ENCODE measurements at regions of chr12 and their contacts with region 1.

Region 1: DNA sequence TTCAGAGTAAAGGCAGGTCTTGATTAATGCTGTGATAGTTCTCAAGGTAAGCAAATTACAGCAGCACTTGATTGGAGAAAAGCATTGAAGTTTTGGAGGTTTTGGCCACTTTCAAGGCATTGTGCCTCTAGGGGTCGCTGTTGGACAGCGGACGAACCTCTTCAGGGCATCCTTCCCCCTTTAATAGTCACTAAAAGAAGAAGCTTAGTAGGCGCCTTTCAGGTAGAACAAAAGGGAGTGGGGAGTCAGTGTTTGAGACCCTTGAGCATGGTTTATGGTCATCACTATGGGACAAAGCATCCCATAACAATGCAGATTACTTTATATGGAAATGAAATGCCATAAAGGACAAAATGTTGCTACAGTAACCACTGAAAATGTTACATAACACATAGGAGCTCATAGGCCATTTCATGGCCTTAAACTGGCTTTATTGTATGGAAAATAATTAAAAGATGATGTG is 199.5 kb upstream of the DCN start:
- H3K4me3 ChIP-seq: peak overlapping the region; percentile 19
- H3K27ac ChIP-seq: peak overlapping the region; percentile 28; the same call in 1 of the 2 replicates
- H3K4me1 ChIP-seq: no peaks in the 10 kb centered on the region
- CTCF ChIP-seq: peak; percentile 50

Region 2: DNA sequence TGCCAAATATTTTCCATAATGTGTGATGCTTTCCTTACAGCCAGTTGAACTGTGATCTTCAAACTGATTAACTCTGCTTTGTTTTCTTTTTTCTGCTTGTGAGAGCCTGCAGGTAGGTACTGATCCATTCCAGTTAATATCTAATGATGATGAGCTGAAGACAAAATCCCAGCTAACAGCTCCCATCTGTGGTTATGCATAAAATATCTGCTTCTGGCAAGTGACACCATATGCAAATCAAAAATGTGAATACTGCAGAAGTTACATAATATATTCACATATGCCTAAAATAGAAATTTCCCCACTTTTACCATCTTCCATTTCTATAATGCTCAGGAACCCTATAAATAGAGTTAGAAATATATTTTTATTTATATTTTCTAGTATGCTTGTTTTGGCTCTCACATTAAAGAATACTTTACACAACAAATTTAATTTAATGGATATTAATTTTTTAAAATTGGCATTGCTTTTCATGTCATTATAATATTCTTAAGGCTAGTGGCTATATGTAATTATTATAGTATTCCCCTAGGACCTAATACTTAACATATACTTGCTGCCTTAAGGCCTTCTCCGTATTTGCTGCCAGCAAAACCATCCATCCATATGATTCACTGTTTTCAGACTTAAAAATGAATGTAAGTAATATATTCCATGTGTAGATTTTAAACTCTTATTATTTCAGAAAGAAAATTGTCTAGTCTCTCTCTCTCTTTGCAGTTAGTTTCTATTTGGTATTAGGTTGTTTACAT is 511.0 kb before region 1 on chr12:
- CTCF ChIA-PET with region 1: no interaction called
- POLR2A ChIA-PET with region 1: no interaction called
- H3K4me3 ChIP-seq: no peak overlapping the region
- H3K27ac ChIP-seq: no peak overlapping the region
- H3K4me1 ChIP-seq: no peaks in the 10 kb centered on the region
- CTCF ChIP-seq: no peak

Region 3: DNA sequence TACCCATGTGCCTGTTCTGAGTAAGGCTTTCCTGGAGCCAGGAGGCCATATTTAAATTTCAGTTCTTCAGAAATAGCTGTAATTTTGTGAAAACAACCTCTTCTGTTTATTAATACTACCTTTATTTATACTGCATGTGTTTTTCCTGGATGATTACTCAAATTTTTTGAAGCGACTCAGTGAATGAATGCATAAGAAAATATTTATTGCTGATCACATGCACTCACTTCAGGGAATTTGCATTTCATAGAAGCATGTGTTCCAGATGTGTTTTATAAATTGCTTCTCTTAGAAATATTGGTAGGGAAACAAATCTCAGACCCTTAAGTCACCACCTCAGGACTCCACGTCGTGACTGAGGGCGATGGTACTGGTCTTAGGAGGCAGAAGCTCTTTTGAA is 177.7 kb before region 1 on chr12:
- CTCF ChIA-PET with region 1: no interaction called
- POLR2A ChIA-PET with region 1: no interaction called
- H3K4me3 ChIP-seq: no peak overlapping the region
- H3K27ac ChIP-seq: no peak overlapping the region
- H3K4me1 ChIP-seq: no peaks in the 10 kb centered on the region
- CTCF ChIP-seq: no peak

Region 4: DNA sequence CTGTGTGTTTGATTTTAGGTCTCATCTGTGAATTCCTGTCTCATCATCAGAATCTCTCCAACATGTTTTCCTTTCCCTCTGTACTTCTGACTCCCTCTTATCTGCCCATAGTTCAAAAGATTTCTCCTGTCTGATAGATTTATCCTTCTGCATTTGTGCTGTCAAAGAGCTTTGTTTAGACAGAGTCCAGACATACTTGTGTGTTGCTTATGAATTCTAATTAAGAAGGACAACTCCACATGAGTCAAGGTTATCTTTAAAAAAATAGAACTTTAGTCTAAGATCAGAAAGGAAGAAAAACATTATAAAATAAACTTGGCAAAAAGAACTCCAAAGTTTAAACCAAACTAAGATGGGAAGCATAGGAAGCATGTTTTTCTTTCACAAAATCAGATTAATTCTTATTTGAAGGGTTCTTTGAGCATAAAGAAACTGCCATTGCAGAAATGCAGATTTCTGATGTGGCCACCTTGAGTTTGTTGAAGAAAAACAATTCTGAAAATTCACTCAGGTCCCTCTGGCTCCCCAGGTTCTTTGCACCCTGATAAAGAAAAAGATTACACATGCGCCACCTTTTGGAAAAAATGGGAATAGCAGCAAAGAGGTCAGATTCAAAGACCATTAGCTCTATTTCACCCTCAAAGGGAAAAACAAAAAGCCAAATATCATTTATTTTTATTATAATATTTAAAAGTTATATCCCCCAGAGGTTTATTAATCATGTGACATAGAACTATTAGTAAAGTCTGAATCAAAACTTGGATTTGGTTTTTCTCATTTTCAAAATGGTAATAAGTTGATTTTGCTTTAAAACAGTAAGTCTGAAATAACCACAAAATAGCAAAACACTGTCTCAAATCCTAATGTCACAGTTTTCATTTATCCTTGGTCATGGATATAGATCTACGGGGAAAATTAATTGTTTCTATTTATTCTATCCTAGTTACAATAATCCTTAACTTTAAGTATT is 55.8 kb before region 1 on chr12:
- CTCF ChIA-PET with region 1: no interaction called
- POLR2A ChIA-PET with region 1: no interaction called
- H3K4me3 ChIP-seq: no peak overlapping the region
- H3K27ac ChIP-seq: no peak overlapping the region
- H3K4me1 ChIP-seq: no peaks in the 10 kb centered on the region
- CTCF ChIP-seq: no peak

Region 5: DNA sequence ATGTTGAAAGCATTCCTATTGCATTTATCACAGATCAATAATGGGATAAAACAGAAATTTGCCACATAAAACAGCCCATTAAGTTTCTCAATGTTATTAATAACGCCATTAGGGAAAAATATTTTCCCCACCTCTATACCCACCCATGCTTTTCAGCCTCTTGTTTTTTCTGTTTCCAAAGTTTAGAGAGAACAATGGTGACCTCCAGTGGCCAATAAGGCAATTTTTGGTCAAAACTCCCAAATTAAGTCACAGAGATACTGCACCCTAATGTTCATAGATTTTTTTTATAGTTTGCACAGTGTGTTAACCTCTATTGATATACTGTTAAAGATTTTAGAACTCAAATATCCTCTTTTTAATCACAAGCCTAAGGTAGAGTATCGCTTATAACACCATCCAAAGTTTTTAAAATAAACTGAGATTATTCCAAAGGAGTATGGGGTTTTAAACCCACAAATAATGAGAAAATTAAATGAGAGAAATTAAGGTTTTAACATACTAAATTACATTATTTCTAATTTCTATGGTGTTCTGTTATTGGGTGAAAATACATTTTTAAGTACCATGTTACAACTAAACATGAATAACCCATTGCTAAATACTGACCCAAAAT is 14.8 kb before region 1 on chr12:
- CTCF ChIA-PET with region 1: interaction called, 10 read pairs
- POLR2A ChIA-PET with region 1: no interaction called
- H3K4me3 ChIP-seq: no peak overlapping the region
- H3K27ac ChIP-seq: no peak overlapping the region
- H3K4me1 ChIP-seq: no peaks in the 10 kb centered on the region
- CTCF ChIP-seq: no peak

Region 6: DNA sequence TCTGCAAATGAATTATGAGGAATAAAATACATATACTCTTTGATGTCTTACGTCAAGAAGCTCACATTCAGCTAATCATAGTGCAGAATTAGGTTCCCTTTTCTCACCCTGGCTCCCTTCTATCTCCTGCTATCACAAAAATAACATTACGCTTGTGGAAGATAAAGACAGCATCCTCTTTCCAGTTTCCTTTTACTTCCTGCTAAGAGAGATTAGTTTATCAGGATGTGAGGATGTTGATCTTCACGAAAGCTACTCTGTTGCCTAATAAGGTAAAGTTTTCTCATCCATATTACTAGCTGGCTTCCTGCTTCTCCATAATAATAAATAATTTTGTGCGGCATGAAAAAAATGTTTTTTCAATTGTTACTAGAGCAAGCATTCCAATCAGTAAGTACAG is 18.2 kb after region 1 on chr12:
- CTCF ChIA-PET with region 1: interaction called, 15 read pairs
- POLR2A ChIA-PET with region 1: no interaction called
- H3K4me3 ChIP-seq: no peak overlapping the region
- H3K27ac ChIP-seq: no peak overlapping the region
- H3K4me1 ChIP-seq: no peaks in the 10 kb centered on the region
- CTCF ChIP-seq: no peak

Region 7: GRCh38 chr12:91460469-91460868 is 78.4 kb after region 1 on chr12:
- CTCF ChIA-PET with region 1: interaction called, 11 read pairs
- POLR2A ChIA-PET with region 1: no interaction called
- H3K4me3 ChIP-seq: no peak overlapping the region
- H3K27ac ChIP-seq: no peak overlapping the region
- H3K4me1 ChIP-seq: no peaks in the 10 kb centered on the region; the same call in 1 of the 2 replicates
- CTCF ChIP-seq: no peak

Region 8: GRCh38 chr12:92145731-92146496 is 763.8 kb after region 1 on chr12 and contains the start of gene BTG1:
- CTCF ChIA-PET with region 1: interaction called, 4 read pairs
- POLR2A ChIA-PET with region 1: interaction called, 11 read pairs
- H3K4me3 ChIP-seq: peak within 1 kb of the TSS; percentile 99
- H3K27ac ChIP-seq: peak within 1 kb of the TSS; percentile 98
- H3K4me1 ChIP-seq: no peaks in the 10 kb centered on the region; the same call in 1 of the 2 replicates
- CTCF ChIP-seq: peak; percentile 58; the same call in 1 of the 2 replicates

Region 9: DNA sequence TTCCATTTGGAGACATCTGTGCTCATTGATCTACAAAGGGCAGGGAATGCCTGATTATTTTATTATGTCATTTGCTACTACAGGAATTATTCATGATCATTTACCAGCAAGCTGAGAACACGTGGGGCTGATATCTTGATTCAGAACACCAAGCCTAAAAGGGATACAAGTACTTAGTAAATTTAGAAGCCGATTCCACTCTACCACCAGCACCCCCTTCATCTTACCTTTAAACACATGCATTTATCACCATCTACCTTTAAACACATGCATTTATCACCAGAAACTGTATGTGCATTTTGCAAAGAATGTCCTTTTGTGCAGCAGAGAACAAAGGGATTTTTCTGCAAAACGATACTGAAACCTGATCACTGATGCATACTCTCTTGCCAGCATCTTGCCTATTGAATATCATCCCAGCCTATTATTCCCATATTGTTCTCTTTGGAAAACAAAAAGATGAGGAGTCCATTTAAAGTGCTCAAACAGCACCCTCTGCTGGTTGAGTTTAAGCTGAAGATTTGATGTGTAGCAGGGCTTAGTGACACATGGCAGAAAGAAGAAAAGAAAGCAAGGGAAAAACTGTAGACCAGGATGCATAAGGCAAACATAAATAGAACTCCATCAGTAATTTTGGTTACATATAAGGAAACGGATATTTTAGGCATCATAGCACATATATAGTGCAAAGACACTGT is 1188.1 kb after region 1 on chr12:
- CTCF ChIA-PET with region 1: interaction called, 19 read pairs
- POLR2A ChIA-PET with region 1: no interaction called
- H3K4me3 ChIP-seq: no peak overlapping the region
- H3K27ac ChIP-seq: no peak overlapping the region
- H3K4me1 ChIP-seq: no peaks in the 10 kb centered on the region
- CTCF ChIP-seq: peak; percentile 81

Region 10: GRCh38 chr12:92649511-92650227 is 1267.6 kb after region 1 on chr12:
- CTCF ChIA-PET with region 1: interaction called, 16 read pairs
- POLR2A ChIA-PET with region 1: no interaction called
- H3K4me3 ChIP-seq: no peak overlapping the region
- H3K27ac ChIP-seq: no peak overlapping the region
- H3K4me1 ChIP-seq: no peaks in the 10 kb centered on the region
- CTCF ChIP-seq: peak; percentile 85